CD4-positive, alpha-beta T cell (primary cell): ENCODE measurements at regions of chr17 and their contacts with region 1.

Region 1: GRCh38 chr17:64648234-64648633 is 13.9 kb downstream of the SMURF2 start:
- DNase-seq: no peak
- ATAC-seq: no peak
- H3K4me3 ChIP-seq: no peak overlapping the region
- H3K4me3 Mint-ChIP-seq: no peak overlapping the region
- H3K27ac ChIP-seq: no peak overlapping the region
- H3K27ac Mint-ChIP-seq: no peak overlapping the region
- H3K4me1 ChIP-seq: peaks cover 3% of the 10 kb centered on the region
- H3K4me1 Mint-ChIP-seq: peaks cover 59% of the 10 kb centered on the region
- H3K27me3 ChIP-seq: no peaks in the 10 kb centered on the region
- H3K27me3 Mint-ChIP-seq: no peaks in the 10 kb centered on the region
- CTCF ChIP-seq: no peak

Region 2: GRCh38 chr17:64572638-64573154 is 75.5 kb before region 1 on chr17:
- CTCF ChIA-PET with region 1: no interaction called
- POLR2A ChIA-PET with region 1: no interaction called
- intact Hi-C with region 1: loop called in 1 of 2 experiments (anchors 5 kb)
- DNase-seq: peak in 3 of 14 experiments; percentile 9 to 49 (median 13)
- ATAC-seq: peak; percentile 79
- H3K4me3 ChIP-seq: no peak overlapping the region
- H3K4me3 Mint-ChIP-seq: no peak overlapping the region
- H3K27ac ChIP-seq: no peak overlapping the region
- H3K27ac Mint-ChIP-seq: peak overlapping the region; percentile 82
- H3K4me1 ChIP-seq: peaks cover 9% of the 10 kb centered on the region
- H3K4me1 Mint-ChIP-seq: peaks cover 17% of the 10 kb centered on the region
- H3K27me3 ChIP-seq: no peaks in the 10 kb centered on the region
- H3K27me3 Mint-ChIP-seq: no peaks in the 10 kb centered on the region
- CTCF ChIP-seq: no peak